ENCODE measurements at regions of chr17 and their contacts with region 1.

Region 1: DNA sequence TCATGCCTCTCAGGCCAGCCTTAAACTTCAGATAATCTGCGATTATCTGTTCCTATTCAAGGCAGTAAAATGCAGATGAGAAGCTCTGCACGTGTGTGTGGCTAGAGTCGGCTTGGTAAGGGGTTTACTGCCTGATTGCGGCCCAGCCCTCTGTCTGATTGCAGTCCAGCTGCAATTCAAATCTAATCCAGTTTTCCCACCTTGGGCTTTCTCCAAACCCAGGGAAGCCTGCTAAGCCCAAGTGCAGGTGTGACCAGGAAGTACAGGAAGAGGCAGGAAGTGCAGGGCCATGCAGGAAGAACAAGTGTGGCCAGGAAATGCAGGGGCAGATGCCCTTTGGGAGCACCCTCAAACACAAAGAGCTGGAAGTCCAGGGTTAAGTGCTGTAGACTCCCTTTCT is 314.9 kb downstream of the CEP112 start:
- DNase-seq: no peak
- H3K4me3 ChIP-seq: no peak overlapping the region
- H3K27ac ChIP-seq: no peak overlapping the region
- H3K4me1 ChIP-seq: no peaks in the 10 kb centered on the region
- H3K27me3 ChIP-seq: no peaks in the 10 kb centered on the region
- CTCF ChIP-seq: no peak
- EP300 ChIP-seq: no peak
- POLR2A ChIP-seq: no peak

Region 2: DNA sequence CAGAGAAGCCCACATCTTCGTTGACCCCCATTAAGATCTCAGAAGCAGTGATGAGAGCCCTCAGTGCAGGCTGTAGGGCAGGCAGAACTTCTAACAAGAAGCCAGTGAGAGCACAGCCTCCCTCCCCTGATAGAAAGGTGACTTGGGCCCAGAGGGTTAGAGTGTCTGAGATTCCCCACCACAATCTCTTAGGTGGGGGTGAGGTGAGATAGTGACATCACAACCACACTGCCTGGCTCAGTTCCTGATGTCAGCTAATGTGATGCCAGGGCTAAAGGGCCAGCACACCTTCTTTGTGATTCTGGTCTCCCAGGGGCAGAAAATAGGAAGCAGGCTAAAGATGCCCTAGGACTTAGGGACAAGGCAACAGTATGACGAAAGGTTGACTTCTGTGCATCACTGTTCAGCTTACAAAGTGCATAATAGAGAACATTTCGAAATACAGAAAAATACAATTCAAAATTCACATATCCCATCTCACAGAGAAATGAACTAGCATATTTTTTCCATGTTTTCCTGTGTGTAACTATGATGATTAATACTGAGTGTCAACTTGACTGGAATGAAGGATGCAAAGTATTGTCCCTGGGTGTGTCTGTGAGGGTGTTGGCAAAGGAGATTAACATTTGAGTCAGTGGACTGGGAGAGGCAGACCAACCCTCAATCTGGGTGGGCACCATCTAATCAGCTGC is 50.6 kb before region 1 on chr17:
- intact Hi-C with region 1: loop called in 1 of 4 experiments (anchors 10 kb)
- DNase-seq: no peak
- H3K4me3 ChIP-seq: no peak overlapping the region
- H3K27ac ChIP-seq: no peak overlapping the region
- H3K4me1 ChIP-seq: no peaks in the 10 kb centered on the region
- H3K27me3 ChIP-seq: no peaks in the 10 kb centered on the region
- CTCF ChIP-seq: no peak
- EP300 ChIP-seq: no peak
- POLR2A ChIP-seq: no peak

Region 3: DNA sequence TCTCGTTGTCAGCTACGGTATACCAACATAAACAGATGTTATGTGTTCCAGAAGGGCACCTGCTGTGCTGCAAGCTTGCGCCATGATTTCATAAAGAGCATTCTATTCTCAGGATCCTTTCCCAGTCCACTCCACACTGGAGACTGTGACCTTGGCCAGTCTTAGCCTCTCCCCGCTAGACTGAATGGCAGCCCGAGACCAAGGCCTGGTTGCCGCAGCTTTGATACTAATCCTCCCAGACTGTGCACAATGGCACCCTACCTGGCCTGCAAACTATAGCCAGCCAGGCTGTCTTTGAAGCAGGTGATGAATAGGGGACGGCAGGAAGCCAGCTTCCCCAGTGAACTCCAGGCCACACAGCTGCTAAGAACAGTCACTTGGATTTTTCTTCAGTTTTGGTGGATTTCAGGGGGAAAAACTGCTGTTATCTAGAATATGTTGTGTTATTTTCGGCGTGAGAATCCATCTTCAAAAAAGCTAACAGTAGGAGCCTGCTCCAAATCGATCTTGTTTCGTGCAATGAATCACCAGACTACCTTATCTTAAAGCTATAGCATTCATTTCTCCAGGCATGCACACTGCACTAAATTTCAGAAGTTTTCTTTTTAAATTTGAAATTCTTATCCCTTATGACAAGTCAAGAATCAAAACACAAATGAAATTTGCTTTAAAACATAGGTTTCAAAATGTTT is 26.0 kb after region 1 on chr17:
- intact Hi-C with region 1: no loop called
- DNase-seq: peak in 1 of 5 donors; percentile 13
- H3K4me3 ChIP-seq: no peak overlapping the region
- H3K27ac ChIP-seq: no peak overlapping the region
- H3K4me1 ChIP-seq: no peaks in the 10 kb centered on the region
- H3K27me3 ChIP-seq: no peaks in the 10 kb centered on the region
- CTCF ChIP-seq: no peak
- EP300 ChIP-seq: no peak
- POLR2A ChIP-seq: no peak

Region 4: DNA sequence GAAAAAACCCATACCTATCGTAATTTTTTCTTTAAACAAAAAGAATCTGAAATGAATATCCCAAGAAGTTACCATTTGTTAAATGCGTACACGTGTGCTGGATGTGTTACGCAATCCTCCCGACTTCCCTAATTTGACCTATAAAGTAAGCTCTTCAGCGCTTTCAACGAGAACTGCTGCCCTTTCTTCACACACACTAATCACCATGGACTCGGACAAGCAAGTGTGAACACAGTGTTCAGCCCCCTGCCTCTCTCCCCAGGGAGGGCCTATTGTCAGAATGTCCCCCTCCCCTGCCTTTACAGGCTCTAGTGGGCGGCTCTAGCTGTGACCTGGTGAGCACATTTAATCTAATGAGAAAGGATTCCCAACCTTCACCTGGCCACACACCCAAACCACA is 98.9 kb after region 1 on chr17:
- intact Hi-C with region 1: no loop called
- DNase-seq: no peak
- H3K4me3 ChIP-seq: no peak overlapping the region
- H3K27ac ChIP-seq: no peak overlapping the region
- H3K4me1 ChIP-seq: no peaks in the 10 kb centered on the region
- H3K27me3 ChIP-seq: no peaks in the 10 kb centered on the region
- CTCF ChIP-seq: no peak
- EP300 ChIP-seq: no peak
- POLR2A ChIP-seq: no peak

Region 5: GRCh38 chr17:66043456-66043855 is 166.5 kb after region 1 on chr17:
- intact Hi-C with region 1: no loop called
- DNase-seq: no peak
- H3K4me3 ChIP-seq: no peak overlapping the region
- H3K27ac ChIP-seq: no peak overlapping the region
- H3K4me1 ChIP-seq: no peaks in the 10 kb centered on the region
- H3K27me3 ChIP-seq: no peaks in the 10 kb centered on the region
- CTCF ChIP-seq: no peak
- EP300 ChIP-seq: no peak
- POLR2A ChIP-seq: no peak

Measured in ovary (tissue), 10 donors.